ENCODE measurements at regions of chr10 and their contacts with region 1.

Region 1: DNA sequence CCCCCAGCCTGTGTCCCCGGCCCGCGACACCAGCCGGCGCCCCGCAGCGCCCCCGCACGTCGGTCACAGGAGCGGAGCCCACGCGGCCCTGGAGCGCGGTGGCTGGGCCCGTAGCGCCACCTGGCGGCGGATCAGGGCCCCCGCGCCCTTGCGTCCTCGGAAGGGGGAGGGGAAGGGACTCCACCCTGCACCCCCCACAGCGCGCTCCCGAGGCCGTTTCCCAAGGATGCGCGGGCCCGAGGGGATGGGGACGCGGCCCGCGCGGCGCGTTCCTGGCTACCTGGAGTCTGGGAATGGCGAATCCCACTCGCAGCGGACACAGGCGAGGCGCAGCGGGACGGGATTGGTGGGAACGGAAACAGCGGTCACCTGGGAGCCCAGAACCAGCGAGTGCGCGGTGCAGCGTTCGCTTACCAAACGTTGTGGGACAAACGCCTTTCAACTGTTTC is 23.8 kb upstream of the MKI67 start:
- DNase-seq: peak; percentile 81 to 82
- ATAC-seq: peak; percentile 93 to 96
- H3K4me3 ChIP-seq: peak overlapping the region; percentile 52
- H3K27ac ChIP-seq: peak overlapping the region; percentile 71 to 90
- H3K4me1 ChIP-seq: 0 out of 3 replicates have a peak, but pooled peaks cover 3% of the 10 kb centered on the region
- CTCF ChIP-seq: peak; percentile 96
- EP300 ChIP-seq: no peak
- POLR2A ChIP-seq: peak; percentile 35; the same call in 1 of the 2 replicates
- RAD21 ChIP-seq: peak; percentile 75 to 92

Region 2: GRCh38 chr10:128078136-128078969 is 71.7 kb before region 1 on chr10:
- CTCF ChIA-PET with region 1: interaction called, 12 read pairs
- POLR2A ChIA-PET with region 1: no interaction called
- DNase-seq: peak; percentile 46 to 76
- ATAC-seq: peak; percentile 89 to 97
- H3K4me3 ChIP-seq: no peak overlapping the region
- H3K27ac ChIP-seq: no peak overlapping the region
- H3K4me1 ChIP-seq: no peaks in the 10 kb centered on the region
- CTCF ChIP-seq: peak; percentile 71
- EP300 ChIP-seq: no peak
- POLR2A ChIP-seq: no peak
- RAD21 ChIP-seq: peak; percentile 79 to 81

Region 3: DNA sequence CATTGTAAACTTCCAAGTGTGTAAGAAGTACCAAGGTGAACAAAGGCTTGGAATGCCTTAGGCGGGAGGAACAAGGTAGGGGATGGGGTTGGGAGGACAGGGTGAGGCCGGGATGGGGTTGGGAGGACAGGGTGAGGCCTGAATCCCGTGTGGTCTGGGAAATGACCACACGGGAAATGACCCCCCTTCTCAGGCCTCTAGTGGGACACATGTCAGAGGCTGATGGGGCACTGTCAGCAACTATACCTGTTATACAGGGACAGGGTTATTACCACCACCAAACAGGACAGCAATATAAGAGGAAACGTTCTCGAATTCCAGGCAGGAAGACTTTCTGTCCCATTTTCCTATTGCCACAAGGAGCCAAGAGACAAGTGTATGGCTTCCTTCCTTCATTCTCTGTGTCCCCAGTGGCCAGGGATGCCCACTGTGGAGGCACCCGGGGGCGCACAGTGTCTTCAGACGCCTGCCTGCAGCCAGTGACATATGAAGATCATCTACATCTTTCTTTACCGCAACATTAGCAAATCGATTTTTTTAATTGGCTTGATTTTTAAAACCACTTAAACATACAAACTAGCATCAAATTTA is 25.2 kb before region 1 on chr10:
- CTCF ChIA-PET with region 1: interaction called, 15 read pairs
- POLR2A ChIA-PET with region 1: no interaction called
- DNase-seq: peak in 1 of 2 experiments; percentile 26
- ATAC-seq: peak; percentile 7 to 31; a peak in 3 of 6 replicates
- H3K4me3 ChIP-seq: peak overlapping the region; percentile 93
- H3K27ac ChIP-seq: peak overlapping the region; percentile 87 to 97
- H3K4me1 ChIP-seq: peaks cover 27% of the 10 kb centered on the region
- CTCF ChIP-seq: no peak
- EP300 ChIP-seq: no peak
- POLR2A ChIP-seq: no peak
- RAD21 ChIP-seq: no peak

Region 4: GRCh38 chr10:128137877-128138276 is 12.2 kb before region 1 on chr10:
- CTCF ChIA-PET with region 1: interaction called, 11 read pairs
- POLR2A ChIA-PET with region 1: no interaction called
- DNase-seq: no peak
- ATAC-seq: no peak
- H3K4me3 ChIP-seq: no peak overlapping the region
- H3K27ac ChIP-seq: no peak overlapping the region
- H3K4me1 ChIP-seq: no peaks in the 10 kb centered on the region
- CTCF ChIP-seq: no peak
- EP300 ChIP-seq: no peak
- POLR2A ChIP-seq: no peak
- RAD21 ChIP-seq: no peak

Region 5: GRCh38 chr10:128161031-128161430 is 11.0 kb after region 1 on chr10:
- CTCF ChIA-PET with region 1: interaction called, 33 read pairs
- POLR2A ChIA-PET with region 1: no interaction called
- DNase-seq: no peak
- ATAC-seq: no peak
- H3K4me3 ChIP-seq: no peak overlapping the region
- H3K27ac ChIP-seq: no peak overlapping the region
- H3K4me1 ChIP-seq: peaks cover 21% of the 10 kb centered on the region
- CTCF ChIP-seq: no peak
- EP300 ChIP-seq: no peak
- POLR2A ChIP-seq: no peak
- RAD21 ChIP-seq: no peak